GM10248 (cell line): ENCODE measurements at regions of chr6 and their contacts with region 1.

Region 1: GRCh38 chr6:39302669-39303424 is 11.4 kb downstream of the KCNK17 start:
- DNase-seq: peak; percentile 91
- CTCF ChIP-seq: peak; percentile 96

Region 2: DNA sequence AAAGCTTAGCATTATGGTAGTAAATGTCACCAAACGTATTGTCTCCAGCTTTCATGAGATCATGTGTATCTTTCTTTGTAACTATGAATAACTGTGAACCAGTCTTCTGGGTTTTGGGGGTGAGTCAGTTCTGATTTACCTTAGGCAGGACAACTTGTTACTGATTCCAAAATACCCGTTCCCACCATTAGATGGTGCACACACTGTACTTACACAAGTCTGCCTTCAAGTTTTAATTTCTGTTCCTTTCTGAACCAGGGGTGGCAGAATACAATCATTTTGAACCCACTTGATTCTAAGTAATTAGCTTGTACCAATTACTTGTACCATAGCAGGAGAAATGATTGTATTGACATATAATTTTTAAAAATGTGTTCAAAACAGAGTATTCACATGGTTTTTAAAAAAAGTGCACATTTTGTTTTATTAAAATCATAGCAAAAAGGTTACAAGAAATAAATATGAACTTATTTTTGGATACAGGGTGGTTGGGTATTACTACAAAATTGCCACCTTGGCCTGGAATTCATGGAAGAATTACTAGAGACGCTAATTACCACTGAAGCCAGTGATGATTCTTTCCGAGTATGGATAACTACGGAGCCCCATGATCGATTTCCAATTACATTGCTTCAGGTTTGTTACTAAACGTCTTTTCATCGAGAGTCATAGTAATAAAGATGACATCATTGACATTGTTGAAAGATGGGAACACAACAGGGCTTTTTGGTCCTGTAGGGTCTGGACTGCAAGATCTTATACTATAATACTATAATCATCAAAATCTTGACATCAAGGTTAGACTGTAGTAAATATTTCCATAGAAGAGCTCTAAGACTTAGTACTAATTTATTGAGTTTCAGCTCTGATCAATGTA is 329.4 kb before region 1 on chr6:
- CTCF ChIA-PET with region 1: interaction called, 11 read pairs
- POLR2A ChIA-PET with region 1: no interaction called
- DNase-seq: peak; percentile 34
- CTCF ChIP-seq: peak; percentile 53

Region 3: GRCh38 chr6:39088331-39088730 is 214.5 kb before region 1 on chr6:
- CTCF ChIA-PET with region 1: interaction called, 19 read pairs
- POLR2A ChIA-PET with region 1: no interaction called
- DNase-seq: no peak
- CTCF ChIP-seq: no peak

Region 4: DNA sequence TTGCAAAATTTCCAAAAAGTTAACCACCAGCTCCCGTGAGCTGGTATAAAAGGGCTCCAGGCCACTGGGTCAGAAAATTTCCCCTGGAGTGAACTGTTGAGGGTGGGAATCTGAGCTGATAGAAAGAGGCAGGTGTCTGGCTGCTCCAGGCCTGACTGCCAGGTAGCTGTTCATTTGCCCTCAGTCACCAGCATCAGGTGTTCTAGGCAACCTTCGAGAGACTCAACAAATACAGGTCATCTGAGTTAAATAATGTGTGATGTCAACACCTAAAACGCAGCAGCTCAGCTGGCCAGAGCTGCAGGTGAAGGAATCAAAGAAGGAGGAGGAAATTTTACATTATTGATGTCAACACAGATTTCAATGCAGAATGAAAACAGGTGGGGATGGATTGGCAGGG is 120.2 kb before region 1 on chr6:
- CTCF ChIA-PET with region 1: interaction called, 10 read pairs
- POLR2A ChIA-PET with region 1: no interaction called
- DNase-seq: no peak
- CTCF ChIP-seq: no peak

Region 5: DNA sequence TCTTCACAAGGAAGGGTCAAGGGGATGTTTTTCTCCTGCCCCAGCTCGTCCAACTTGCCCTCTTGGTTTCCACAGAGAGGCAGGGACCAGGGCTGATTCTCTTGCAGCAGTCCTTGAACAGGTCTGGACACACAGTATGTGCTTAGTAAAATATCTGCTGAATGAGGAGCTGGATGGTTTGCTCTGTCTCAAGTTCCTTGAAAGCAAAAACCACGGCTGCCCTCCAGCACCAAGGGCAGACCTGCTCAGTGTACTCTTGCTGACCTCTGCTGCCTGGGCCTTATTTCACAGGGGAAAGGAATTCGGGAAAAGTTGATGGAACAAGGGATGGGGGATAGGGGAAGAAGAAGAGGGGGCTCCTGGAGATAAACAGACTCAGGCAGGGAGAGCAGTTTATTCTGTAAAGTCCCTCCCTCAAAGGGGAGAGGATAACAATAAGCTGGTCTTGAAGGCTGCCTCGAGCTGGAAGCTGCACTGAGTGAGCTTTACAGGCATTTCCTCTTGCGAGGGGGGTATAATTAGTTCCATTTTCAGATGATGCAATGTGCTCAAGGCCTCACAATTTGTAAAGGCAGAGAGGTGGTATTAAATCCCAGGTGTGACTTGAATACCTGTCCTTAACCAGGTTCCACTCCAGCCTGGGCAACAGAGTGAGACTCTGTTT is 83.8 kb before region 1 on chr6:
- CTCF ChIA-PET with region 1: interaction called, 14 read pairs
- POLR2A ChIA-PET with region 1: no interaction called
- DNase-seq: no peak
- CTCF ChIP-seq: no peak